CD8-positive, alpha-beta T cell (primary cell): ENCODE measurements at regions of chr12 and their contacts with region 1.

Region 1: DNA sequence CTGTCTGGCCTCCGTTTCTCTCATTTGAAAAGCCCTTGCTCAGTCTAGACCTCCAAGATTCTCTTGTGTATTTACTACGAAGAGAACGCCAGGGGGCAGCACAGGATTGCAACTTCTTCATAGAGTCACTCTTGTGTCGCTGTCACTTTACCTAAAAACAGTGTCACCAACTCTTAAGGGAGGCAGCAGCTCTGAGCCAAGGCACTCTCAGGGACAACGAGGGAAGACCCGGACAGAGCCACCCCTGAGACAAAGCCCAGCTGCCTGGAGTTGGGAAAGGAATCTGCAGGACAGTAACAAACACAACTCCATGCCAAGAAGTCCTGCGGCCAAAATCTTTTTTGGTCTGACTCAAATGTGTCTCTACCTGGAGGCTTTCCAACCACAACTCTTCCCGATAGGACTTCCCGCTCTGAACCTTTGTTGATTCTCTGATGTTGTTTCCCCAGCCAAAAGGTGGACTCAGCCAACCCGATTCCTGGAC is 9.6 kb upstream of the RPAP3 start:
- DNase-seq: peak; percentile 56 to 88 (median 85)
- ATAC-seq: peak; percentile 85
- H3K4me3 ChIP-seq: no peak overlapping the region
- H3K4me3 Mint-ChIP-seq: no peak overlapping the region
- H3K27ac ChIP-seq: no peak overlapping the region
- H3K27ac Mint-ChIP-seq: no peak overlapping the region
- H3K4me1 ChIP-seq: peaks cover 17% of the 10 kb centered on the region
- H3K4me1 Mint-ChIP-seq: peaks cover 27% of the 10 kb centered on the region
- H3K27me3 ChIP-seq: no peaks in the 10 kb centered on the region
- H3K27me3 Mint-ChIP-seq: no peaks in the 10 kb centered on the region
- CTCF ChIP-seq: peak; percentile 67

Region 2: DNA sequence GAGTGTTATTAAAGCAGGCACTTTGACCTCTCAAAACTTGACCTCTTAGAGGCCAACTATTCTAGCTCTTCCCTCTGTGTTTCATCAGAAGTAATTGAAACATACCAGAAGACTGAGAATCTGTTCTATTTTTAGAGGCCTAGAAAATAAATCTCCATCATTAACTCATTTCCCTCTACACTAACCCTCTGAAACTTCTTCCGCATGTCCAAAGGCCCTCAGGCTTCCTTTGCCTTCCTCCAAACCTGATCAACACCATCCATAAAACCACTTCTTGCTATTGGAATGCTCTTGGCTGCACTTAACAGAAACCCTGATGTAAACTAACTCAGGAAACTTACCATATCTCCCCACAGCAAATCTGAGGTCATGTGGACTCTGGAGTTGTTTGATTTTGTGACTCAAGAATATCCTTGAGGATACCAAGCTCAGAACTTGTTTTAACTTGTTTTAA is 206.0 kb before region 1 on chr12:
- CTCF ChIA-PET with region 1: no interaction called
- POLR2A ChIA-PET with region 1: no interaction called
- intact Hi-C with region 1: no loop called
- DNase-seq: no peak
- ATAC-seq: no peak
- H3K4me3 ChIP-seq: no peak overlapping the region
- H3K4me3 Mint-ChIP-seq: no peak overlapping the region
- H3K27ac ChIP-seq: no peak overlapping the region
- H3K27ac Mint-ChIP-seq: no peak overlapping the region
- H3K4me1 ChIP-seq: no peaks in the 10 kb centered on the region
- H3K4me1 Mint-ChIP-seq: no peaks in the 10 kb centered on the region
- H3K27me3 ChIP-seq: no peaks in the 10 kb centered on the region
- H3K27me3 Mint-ChIP-seq: no peaks in the 10 kb centered on the region
- CTCF ChIP-seq: no peak

Region 3: GRCh38 chr12:47602325-47602724 is 113.1 kb before region 1 on chr12:
- CTCF ChIA-PET with region 1: no interaction called
- POLR2A ChIA-PET with region 1: no interaction called
- intact Hi-C with region 1: no loop called
- DNase-seq: no peak
- ATAC-seq: no peak
- H3K4me3 ChIP-seq: no peak overlapping the region
- H3K4me3 Mint-ChIP-seq: no peak overlapping the region
- H3K27ac ChIP-seq: no peak overlapping the region
- H3K27ac Mint-ChIP-seq: no peak overlapping the region
- H3K4me1 ChIP-seq: no peaks in the 10 kb centered on the region
- H3K4me1 Mint-ChIP-seq: no peaks in the 10 kb centered on the region
- H3K27me3 ChIP-seq: no peaks in the 10 kb centered on the region
- H3K27me3 Mint-ChIP-seq: no peaks in the 10 kb centered on the region
- CTCF ChIP-seq: no peak

Region 4: DNA sequence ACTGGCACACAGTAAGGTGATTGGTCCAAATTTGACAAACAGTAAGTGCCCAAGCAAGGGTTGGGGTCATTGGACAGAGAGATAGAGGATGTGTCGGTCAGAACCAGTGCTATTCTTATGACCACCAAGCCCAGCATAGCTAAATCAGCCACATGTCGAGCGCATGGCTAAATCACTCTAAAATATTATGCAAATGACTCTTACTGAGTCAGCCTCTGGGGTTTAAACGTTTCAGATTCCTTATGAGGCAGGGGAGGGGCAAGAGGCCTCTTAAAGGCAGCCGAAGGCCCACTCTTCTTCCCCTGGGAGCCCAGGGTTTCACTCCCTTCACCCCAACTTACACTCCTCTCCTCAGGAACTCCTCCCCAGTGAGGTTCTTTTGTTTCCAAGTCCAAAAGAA is 10.5 kb after region 1 on chr12:
- CTCF ChIA-PET with region 1: interaction called, 37 read pairs
- POLR2A ChIA-PET with region 1: interaction called, 3 read pairs
- intact Hi-C with region 1: no loop called
- DNase-seq: no peak
- ATAC-seq: no peak
- H3K4me3 ChIP-seq: no peak overlapping the region
- H3K4me3 Mint-ChIP-seq: no peak overlapping the region
- H3K27ac ChIP-seq: no peak overlapping the region
- H3K27ac Mint-ChIP-seq: no peak overlapping the region
- H3K4me1 ChIP-seq: peaks cover 15% of the 10 kb centered on the region
- H3K4me1 Mint-ChIP-seq: peaks cover 16% of the 10 kb centered on the region
- H3K27me3 ChIP-seq: peaks cover 0 to 5% of the 10 kb centered on the region in 2 experiments
- H3K27me3 Mint-ChIP-seq: no peaks in the 10 kb centered on the region
- CTCF ChIP-seq: no peak

Region 5: DNA sequence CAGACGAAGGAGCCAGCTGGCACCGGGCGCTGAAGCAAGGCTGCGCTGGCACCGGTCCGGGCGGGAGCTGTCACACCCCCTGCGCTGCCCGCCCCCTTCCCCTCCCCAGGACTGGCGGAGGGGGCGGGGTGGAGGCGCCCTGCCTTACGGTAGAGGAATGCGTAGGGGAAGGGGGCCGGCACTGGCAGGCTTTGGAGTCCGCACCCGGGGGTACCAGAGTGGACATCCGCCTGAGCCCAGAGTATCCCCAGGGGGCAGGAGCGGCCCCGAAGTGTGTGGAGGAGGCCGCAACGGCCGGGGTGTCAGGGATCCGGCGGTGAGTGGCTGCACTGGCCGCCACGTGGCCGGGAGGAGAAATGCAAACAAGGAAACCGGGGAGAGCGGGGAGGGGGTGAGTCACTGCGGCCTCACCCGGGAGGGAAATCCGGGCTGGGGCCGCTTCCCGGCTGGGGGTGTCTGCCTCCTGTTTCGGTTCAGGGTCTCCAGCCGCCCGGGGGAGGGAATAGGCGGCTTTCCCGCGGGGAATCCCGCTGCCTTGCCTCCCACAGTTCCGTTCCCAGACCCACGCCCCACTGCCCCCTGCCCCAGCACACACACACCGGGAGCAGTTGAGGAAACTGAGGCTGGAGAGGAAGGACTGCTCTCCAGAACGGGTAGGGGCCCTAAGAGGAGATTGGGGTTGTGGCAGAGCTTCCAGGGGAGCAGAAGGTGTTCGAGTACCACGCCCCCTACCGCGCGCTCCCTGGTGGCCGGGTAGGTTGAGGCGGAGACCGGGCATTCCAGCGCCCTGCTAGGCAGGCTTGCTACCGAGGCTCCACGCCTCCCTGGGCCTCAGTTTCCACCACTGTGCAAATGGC is 43.6 kb after region 1 on chr12 and contains the start of gene RAPGEF3:
- CTCF ChIA-PET with region 1: interaction called, 37 read pairs
- POLR2A ChIA-PET with region 1: interaction called, 3 read pairs
- intact Hi-C with region 1: loop called in 1 of 2 experiments (anchors 1 kb)
- DNase-seq: peak in 8 of 9 experiments; percentile 54 to 81 (median 72)
- ATAC-seq: peak; percentile 78
- H3K4me3 ChIP-seq: peak within 1 kb of the TSS; percentile 59 to 61
- H3K4me3 Mint-ChIP-seq: peak within 1 kb of the TSS; percentile 79
- H3K27ac ChIP-seq: no peak within 1 kb of the TSS
- H3K27ac Mint-ChIP-seq: no peak within 1 kb of the TSS
- H3K4me1 ChIP-seq: peaks cover 12% of the 10 kb centered on the region
- H3K4me1 Mint-ChIP-seq: peaks cover 23% of the 10 kb centered on the region
- H3K27me3 ChIP-seq: peaks cover 0 to 6% of the 10 kb centered on the region in 2 experiments
- H3K27me3 Mint-ChIP-seq: no peaks in the 10 kb centered on the region
- CTCF ChIP-seq: peak; percentile 58
- total RNA-seq, gene RAPGEF3: 0.14 to 0.25 TPM

Region 6: GRCh38 chr12:47773062-47773857 is 57.8 kb after region 1 on chr12 and contains the start of gene SLC48A1:
- CTCF ChIA-PET with region 1: interaction called, 147 read pairs
- POLR2A ChIA-PET with region 1: no interaction called
- intact Hi-C with region 1: no loop called
- DNase-seq: peak; percentile 50 to 85 (median 71)
- ATAC-seq: peak; percentile 93
- H3K4me3 ChIP-seq: peak within 1 kb of the TSS; percentile 43 to 58
- H3K4me3 Mint-ChIP-seq: peak within 1 kb of the TSS; percentile 85
- H3K27ac ChIP-seq: peak within 1 kb of the TSS in 1 of 2 experiments; percentile 24
- H3K27ac Mint-ChIP-seq: peak within 1 kb of the TSS; percentile 66
- H3K4me1 ChIP-seq: peaks cover 16% of the 10 kb centered on the region
- H3K4me1 Mint-ChIP-seq: peaks cover 14% of the 10 kb centered on the region
- H3K27me3 ChIP-seq: no peaks in the 10 kb centered on the region
- H3K27me3 Mint-ChIP-seq: no peaks in the 10 kb centered on the region
- CTCF ChIP-seq: no peak
- total RNA-seq, gene SLC48A1: 4.3 to 5.5 TPM

Region 7: GRCh38 chr12:47949441-47950308 is 234.2 kb after region 1 on chr12:
- CTCF ChIA-PET with region 1: interaction called, 4 read pairs
- POLR2A ChIA-PET with region 1: no interaction called
- intact Hi-C with region 1: loop called in 1 of 2 experiments (anchors 1 kb)
- DNase-seq: peak in 6 of 9 experiments; percentile 15 to 59 (median 42)
- ATAC-seq: peak; percentile 61
- H3K4me3 ChIP-seq: no peak overlapping the region
- H3K4me3 Mint-ChIP-seq: no peak overlapping the region
- H3K27ac ChIP-seq: no peak overlapping the region
- H3K27ac Mint-ChIP-seq: no peak overlapping the region
- H3K4me1 ChIP-seq: no peaks in the 10 kb centered on the region
- H3K4me1 Mint-ChIP-seq: no peaks in the 10 kb centered on the region
- H3K27me3 ChIP-seq: peaks cover 0 to 1% of the 10 kb centered on the region in 2 experiments
- H3K27me3 Mint-ChIP-seq: peaks cover 8% of the 10 kb centered on the region
- CTCF ChIP-seq: peak; percentile 66